Head of caudate nucleus (tissue), 42 donors: ENCODE measurements at regions of chr20 and their contacts with region 1.

Region 1: GRCh38 chr20:58870239-58871014 is 17.9 kb downstream of the GNAS start:
- DNase-seq: peak; percentile 50 to 90 (median 78)

Region 2: GRCh38 chr20:58692594-58693226 is 177.7 kb before region 1 on chr20 and contains the start of gene NPEPL1:
- intact Hi-C with region 1: no loop called
- DNase-seq: peak in 35 of 42 donors; percentile 27 to 80 (median 59)

Region 3: GRCh38 chr20:58762120-58762519 is 108.3 kb before region 1 on chr20:
- intact Hi-C with region 1: no loop called
- DNase-seq: peak in 1 of 42 donors; percentile 11

Region 4: DNA sequence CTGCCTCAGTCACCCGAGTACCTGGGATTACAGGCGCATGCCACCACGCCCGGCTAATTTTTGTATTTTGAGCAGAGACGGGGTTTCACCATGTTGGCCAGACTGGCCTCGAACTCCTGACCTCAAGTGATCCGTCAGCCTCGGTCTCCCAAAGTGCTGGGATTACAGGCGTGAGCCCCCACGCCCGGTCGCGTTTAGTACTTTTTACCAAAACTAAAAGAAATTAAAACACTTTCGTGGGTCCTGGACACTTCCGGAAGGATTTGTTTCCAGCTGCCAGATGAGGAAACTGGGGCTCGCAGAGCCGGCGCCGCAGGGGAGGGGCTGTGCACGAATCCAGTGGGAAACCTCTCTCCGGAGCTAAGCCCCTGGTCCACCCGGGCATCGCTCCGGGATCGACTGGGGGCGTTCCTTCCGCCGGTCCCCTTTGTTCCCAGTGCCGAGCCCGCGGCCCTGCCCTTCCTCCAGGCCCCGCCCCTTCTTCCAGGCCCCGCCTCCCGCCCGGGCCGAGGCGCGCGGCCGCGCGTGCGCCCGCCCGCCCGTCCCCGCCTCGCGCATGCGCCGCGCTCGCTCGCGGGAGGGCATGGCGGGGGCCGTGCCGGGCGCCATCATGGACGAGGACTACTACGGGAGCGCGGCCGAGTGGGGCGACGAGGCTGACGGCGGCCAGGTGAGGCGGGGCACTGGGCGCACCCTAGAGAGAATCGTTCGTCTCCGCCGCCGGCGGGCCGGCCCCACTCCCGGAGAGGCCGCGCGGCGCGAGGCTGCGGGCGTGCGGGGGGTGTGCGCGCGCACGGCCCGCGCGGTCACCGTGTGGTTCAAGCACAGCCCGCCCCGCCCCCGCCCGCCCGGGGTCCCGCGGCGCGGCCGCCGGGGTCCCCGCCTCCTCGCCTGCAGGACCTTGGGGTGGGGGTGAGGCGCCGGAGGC is 110.5 kb after region 1 on chr20 and contains the start of gene NELFCD:
- intact Hi-C with region 1: loop called (anchors 10 kb)
- DNase-seq: peak; percentile 53 to 92 (median 84)

Region 5: DNA sequence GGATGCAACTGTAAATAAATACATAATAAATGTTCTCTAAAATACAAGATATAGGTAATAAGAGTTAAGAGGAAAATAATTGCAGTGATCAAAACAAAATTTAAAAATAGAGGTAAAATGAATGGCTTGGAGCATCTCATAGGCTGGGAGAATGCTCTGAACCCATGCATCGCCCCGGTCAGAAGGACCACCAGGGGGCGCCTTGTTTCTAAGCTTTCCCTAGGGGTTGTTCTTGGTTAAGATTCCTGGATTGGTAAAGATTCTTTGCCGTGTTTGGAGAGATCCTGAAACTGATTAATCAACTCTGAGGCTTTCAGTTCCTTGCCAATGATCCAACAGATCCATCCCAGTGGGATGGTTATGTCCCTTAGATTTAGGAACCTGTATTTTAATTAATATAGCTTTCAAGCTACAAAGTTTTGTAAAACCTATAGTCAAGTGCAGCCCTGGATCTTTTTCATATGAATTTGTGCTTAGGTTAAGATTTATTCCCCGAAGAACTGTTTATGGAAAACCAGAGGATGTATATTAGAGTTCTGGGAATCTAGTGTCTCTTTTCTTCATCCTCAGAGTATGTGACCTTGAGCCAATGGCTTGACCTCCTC is 217.5 kb after region 1 on chr20:
- intact Hi-C with region 1: loop called (anchors 10 kb)
- DNase-seq: peak; percentile 74 to 97 (median 90)

Region 6: GRCh38 chr20:59214606-59215547 is 344.4 kb after region 1 on chr20:
- intact Hi-C with region 1: loop called (anchors 5 kb)
- DNase-seq: no peak

Region 7: GRCh38 chr20:59222253-59223181 is 352.1 kb after region 1 on chr20:
- intact Hi-C with region 1: loop called (anchors 5 kb)
- DNase-seq: peak; percentile 37 to 93 (median 83)

Region 8: GRCh38 chr20:59403261-59403961 is 533.0 kb after region 1 on chr20:
- intact Hi-C with region 1: loop called (anchors 10 kb)
- DNase-seq: peak in 41 of 42 donors; percentile 12 to 86 (median 71)

Region 9: GRCh38 chr20:59495894-59496510 is 625.6 kb after region 1 on chr20:
- intact Hi-C with region 1: loop called (anchors 10 kb)
- DNase-seq: peak; percentile 38 to 89 (median 78)